ENCODE measurements at regions of chr20 and their contacts with region 1.

Region 1: GRCh38 chr20:266596-267562 is 9.4 kb downstream of the DEFB132 start:
- DNase-seq: peak; percentile 94
- ATAC-seq: peak; percentile 97
- H3K4me3 Mint-ChIP-seq: peak overlapping the region; percentile 77
- H3K27ac Mint-ChIP-seq: peak overlapping the region; percentile 62
- H3K4me1 Mint-ChIP-seq: peaks cover 10% of the 10 kb centered on the region
- H3K27me3 Mint-ChIP-seq: peaks cover 6% of the 10 kb centered on the region

Region 2: GRCh38 chr20:219290-220115 is 47.4 kb before region 1 on chr20:
- CTCF ChIA-PET with region 1: interaction called, 11 read pairs
- POLR2A ChIA-PET with region 1: interaction called, 3 read pairs
- DNase-seq: no peak
- ATAC-seq: no peak
- H3K4me3 Mint-ChIP-seq: no peak overlapping the region
- H3K27ac Mint-ChIP-seq: no peak overlapping the region
- H3K4me1 Mint-ChIP-seq: no peaks in the 10 kb centered on the region
- H3K27me3 Mint-ChIP-seq: peaks cover 30% of the 10 kb centered on the region

Region 3: DNA sequence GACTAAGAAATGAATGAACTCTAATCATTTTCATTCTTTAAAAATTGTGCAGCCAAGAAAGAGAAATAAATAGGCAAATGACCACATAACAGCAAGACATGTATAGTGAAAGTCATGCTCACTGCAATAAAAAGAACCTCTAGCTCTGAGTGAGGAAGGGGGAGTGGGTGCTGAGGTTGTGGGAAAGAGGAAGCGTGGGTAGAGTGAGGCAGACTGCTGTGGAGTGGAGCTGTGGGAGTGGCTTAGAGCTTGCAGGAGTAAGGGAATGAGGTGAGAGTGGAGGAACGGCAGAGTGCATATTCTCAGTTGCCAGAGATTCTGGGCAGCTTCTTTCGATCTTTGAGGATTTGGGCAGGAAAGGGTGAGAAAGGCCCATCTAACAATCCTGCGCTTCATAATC is 29.4 kb before region 1 on chr20:
- CTCF ChIA-PET with region 1: interaction called, 46 read pairs
- POLR2A ChIA-PET with region 1: interaction called, 3 read pairs
- DNase-seq: no peak
- ATAC-seq: peak; percentile 60
- H3K4me3 Mint-ChIP-seq: peak overlapping the region; percentile 53
- H3K27ac Mint-ChIP-seq: peak overlapping the region; percentile 87
- H3K4me1 Mint-ChIP-seq: peaks cover 15% of the 10 kb centered on the region
- H3K27me3 Mint-ChIP-seq: peaks cover 5% of the 10 kb centered on the region

Region 4: DNA sequence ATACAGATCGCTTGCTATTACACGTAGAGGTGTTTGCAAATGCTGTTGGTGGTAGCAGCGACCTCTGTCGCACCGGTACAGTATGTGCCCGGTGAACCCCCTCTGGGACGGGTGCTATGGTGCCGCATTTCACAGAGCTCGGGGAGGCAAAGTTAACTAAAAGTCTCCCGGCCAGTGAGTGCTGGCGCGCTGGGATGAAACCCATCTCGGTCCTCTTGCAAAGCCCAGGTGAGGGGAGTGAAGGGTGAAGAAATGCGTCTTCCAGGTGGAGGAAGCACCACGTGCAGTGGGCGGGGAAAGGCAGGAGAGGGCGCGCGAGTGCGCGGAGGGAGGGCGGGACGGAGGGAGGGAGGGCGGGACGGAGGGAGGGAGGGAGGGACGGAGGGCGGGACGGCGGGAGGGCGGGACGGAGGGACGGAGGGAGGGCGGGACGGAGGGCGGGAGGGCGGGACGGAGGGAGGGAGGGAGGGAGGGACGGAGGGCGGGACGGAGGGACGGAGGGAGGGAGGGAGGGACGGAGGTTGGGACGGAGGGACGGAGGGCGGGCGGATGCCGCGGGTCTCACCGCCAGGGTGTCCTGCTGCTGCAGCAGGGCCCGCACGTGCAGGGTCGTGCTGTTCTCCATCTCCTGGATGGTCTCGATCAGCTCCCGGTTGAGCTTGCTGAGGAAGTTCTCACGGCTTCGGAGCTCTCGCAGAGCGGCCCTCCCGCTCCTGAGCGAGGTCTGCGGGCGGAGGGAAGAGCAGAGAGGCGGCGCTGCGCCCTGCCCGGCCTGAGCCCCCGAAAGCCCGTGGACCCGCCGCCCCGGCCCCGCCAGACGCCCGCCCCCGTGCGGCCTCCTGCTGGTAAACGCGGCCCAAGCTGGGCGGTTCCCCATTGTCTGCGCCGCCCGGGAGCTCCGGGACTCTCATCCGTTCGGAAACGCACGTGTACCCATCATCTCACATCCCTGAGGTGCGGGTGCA is 12.0 kb after region 1 on chr20:
- CTCF ChIA-PET with region 1: interaction called, 10 read pairs
- POLR2A ChIA-PET with region 1: no interaction called
- DNase-seq: no peak
- ATAC-seq: no peak
- H3K4me3 Mint-ChIP-seq: peak overlapping the region; percentile 34
- H3K27ac Mint-ChIP-seq: no peak overlapping the region
- H3K4me1 Mint-ChIP-seq: no peaks in the 10 kb centered on the region
- H3K27me3 Mint-ChIP-seq: no peaks in the 10 kb centered on the region

Region 5: DNA sequence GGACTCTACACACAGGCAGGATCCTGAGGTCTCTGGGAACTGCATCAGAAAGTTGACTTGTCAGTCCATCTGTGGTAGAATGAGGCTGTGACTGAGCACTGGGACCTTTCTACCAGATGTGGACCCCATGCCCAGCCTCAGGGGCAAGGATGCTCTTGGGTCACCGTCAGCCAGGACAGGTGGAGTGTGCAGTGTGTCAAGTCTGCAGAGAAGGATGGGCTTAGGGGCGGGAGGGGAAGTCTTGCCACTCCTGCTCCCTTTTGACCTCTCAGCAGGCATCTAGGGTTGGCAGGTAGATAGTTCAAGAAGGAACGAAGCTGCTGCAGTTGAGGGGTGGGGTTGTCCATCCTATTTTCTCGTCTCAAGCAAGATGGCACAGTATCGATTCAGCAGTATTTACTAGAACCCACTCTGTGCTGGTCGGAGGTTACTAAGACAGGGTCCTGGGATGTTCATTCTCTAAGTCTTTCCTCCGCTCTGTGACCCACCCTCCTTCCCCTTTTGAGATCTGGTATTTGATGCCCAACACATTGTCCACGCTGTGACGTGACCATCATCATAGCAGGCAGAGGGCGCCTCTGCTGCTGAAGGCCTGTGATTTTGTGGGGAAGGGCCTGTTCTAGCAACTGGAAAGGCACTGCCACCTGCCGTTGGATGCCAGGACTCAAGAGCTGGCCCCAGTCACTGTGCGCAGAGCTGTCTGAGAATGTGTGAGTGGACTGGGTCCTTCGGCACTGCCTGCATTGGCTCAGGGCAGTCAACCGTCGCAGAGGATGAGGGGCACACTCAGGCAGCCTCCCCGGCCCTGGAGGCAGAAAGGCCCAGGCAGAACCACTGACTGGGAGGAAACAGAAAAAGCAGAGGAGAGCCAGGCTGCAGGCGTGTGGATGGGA is 164.4 kb after region 1 on chr20:
- CTCF ChIA-PET with region 1: no interaction called
- POLR2A ChIA-PET with region 1: no interaction called
- DNase-seq: peak; percentile 57
- ATAC-seq: no peak
- H3K4me3 Mint-ChIP-seq: no peak overlapping the region
- H3K27ac Mint-ChIP-seq: peak overlapping the region; percentile 75
- H3K4me1 Mint-ChIP-seq: peaks cover 63% of the 10 kb centered on the region
- H3K27me3 Mint-ChIP-seq: no peaks in the 10 kb centered on the region

Measured in activated CD8-positive, alpha-beta T cell treated with anti-CD3 and anti-CD28 coated beads, Interleukin-2, amount 10 ng/mL, durations not matched to agents 7 days and 5 days (primary cell).